Right lobe of liver (tissue), 6 donors: ENCODE measurements at regions of chr7 and their contacts with region 1.

Region 1: DNA sequence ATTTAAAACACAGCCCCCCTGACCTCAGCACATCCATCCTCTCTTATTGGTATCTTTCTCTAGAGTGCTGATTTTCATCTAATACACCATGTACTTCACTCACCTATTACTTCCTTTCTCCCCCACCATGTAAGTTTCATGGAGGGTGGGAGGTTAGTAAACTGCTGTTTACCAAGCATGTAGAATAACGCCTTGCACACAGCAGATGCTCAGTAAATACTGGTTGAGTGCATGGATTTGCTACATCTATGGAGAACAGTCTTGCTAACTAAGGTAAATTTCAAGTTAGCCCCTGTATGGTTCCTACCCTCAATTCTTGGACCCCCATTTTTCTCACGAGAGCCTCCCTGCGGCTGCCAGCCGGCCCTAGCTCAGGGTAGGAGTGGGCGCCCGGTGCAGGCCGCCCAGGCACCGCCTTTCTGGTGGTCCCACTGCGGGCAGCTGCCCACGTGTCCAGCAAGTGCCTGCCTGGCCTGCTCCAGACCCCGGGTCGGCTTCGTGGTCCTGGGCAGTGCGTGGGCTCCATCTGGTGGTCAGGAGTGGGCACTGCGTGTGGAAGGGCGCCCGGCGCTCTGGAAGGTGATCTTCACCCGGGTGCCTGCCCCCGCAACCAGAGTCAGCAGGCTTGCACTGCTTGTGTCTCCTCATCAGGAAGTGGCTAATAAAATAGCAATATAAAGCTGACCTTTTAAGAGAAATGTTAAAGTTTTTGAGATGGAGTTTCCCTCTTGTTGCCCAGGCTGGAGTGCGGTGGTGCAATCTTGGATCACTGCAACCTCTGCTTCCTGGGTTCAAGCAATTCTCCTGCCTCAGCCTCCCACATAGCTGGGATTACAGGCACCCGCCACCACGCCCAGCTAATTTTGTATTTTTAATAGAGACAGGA is 63.4 kb upstream of the DNAJB6 start:
- DNase-seq: peak; percentile 79 to 85 (median 81)
- ATAC-seq: peak; percentile 84 to 89 (median 86)
- H3K4me3 ChIP-seq: no peak overlapping the region
- H3K27ac ChIP-seq: peak overlapping the region; percentile 85 to 95 (median 88)
- H3K4me1 ChIP-seq: peaks cover 0 to 24% (median 7%) of the 10 kb centered on the region in 4 donors
- H3K27me3 ChIP-seq: no peaks in the 10 kb centered on the region
- CTCF ChIP-seq: peak; percentile 98 to 100 (median 100)
- POLR2A ChIP-seq: no peak

Region 2: DNA sequence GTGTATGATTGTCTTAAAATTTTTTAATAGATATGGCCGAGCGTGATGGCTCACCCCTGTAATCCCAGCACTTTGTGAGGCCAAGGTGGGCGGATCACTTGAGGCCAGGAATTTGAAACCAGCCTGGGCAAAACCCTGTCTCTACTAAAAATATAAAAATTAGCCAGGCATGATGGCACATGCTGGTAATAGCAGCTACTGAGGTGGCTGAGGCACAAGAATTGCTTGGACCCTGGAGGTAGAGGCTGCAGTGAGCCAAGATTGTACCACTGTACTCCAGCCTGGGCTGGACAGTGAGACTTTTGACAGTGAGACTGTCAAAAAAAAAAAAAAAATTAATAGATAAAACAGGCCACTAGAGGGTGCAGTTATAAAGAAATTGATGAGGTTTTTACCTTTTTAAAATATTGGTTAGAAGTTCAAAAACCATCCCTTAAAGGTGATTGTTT is 303.5 kb before region 1 on chr7:
- intact Hi-C with region 1: loop called in 1 of 2 experiments (anchors 10 kb)
- DNase-seq: no peak
- ATAC-seq: peak in 3 of 4 donors; percentile 43 to 59 (median 59)
- H3K4me3 ChIP-seq: no peak overlapping the region
- H3K27ac ChIP-seq: no peak overlapping the region
- H3K4me1 ChIP-seq: no peaks in the 10 kb centered on the region
- H3K27me3 ChIP-seq: no peaks in the 10 kb centered on the region
- CTCF ChIP-seq: peak; percentile 23 to 43 (median 38)
- POLR2A ChIP-seq: no peak